BJ (cell line): ENCODE measurements at regions of chr21 and their contacts with region 1.

Region 1: GRCh38 chr21:45596704-45597318 is 46.7 kb upstream of the PCBP3 start:
- DNase-seq: no peak
- H3K4me3 ChIP-seq: no peak overlapping the region
- H3K27me3 ChIP-seq: peaks cover 11% of the 10 kb centered on the region
- CTCF ChIP-seq: peak; percentile 93

Region 2: GRCh38 chr21:45539796-45540595 is 56.8 kb before region 1 on chr21:
- CTCF ChIA-PET with region 1: no interaction called
- POLR2A ChIA-PET with region 1: no interaction called
- DNase-seq: no peak
- H3K4me3 ChIP-seq: no peak overlapping the region
- H3K27me3 ChIP-seq: no peaks in the 10 kb centered on the region
- CTCF ChIP-seq: no peak

Region 3: GRCh38 chr21:45570826-45571601 is 25.8 kb before region 1 on chr21:
- CTCF ChIA-PET with region 1: interaction called, 11 read pairs
- POLR2A ChIA-PET with region 1: no interaction called
- DNase-seq: no peak
- H3K4me3 ChIP-seq: no peak overlapping the region
- H3K27me3 ChIP-seq: peaks cover 15% of the 10 kb centered on the region
- CTCF ChIP-seq: no peak

Region 4: DNA sequence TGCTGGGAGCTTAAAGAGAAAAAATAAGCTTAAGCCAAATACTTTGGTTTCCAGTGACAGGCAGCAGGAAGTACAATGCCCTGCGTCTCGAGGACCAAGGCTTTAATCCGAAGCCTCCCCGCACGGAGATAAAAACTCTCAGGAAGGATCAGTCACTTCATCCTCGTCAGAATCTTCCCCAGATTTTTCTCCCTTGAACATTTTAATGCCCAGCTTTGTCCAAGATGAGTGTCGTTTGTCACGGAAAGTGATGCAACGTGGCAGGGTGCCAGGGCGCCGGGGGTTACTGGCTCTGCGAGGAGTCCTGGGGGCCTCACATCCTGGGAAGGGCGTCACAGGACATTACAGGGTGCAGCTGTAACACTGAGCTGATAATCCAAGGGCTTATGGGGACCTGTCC is 21.5 kb after region 1 on chr21:
- CTCF ChIA-PET with region 1: interaction called, 16 read pairs
- POLR2A ChIA-PET with region 1: no interaction called
- DNase-seq: no peak
- H3K4me3 ChIP-seq: no peak overlapping the region
- H3K27me3 ChIP-seq: peaks cover 10% of the 10 kb centered on the region
- CTCF ChIP-seq: no peak

Region 5: GRCh38 chr21:45724345-45724961 is 127.6 kb after region 1 on chr21:
- CTCF ChIA-PET with region 1: no interaction called
- POLR2A ChIA-PET with region 1: no interaction called
- DNase-seq: no peak
- H3K4me3 ChIP-seq: no peak overlapping the region
- H3K27me3 ChIP-seq: no peaks in the 10 kb centered on the region
- CTCF ChIP-seq: no peak